ENCODE measurements at regions of chr11 and their contacts with region 1.

Region 1: DNA sequence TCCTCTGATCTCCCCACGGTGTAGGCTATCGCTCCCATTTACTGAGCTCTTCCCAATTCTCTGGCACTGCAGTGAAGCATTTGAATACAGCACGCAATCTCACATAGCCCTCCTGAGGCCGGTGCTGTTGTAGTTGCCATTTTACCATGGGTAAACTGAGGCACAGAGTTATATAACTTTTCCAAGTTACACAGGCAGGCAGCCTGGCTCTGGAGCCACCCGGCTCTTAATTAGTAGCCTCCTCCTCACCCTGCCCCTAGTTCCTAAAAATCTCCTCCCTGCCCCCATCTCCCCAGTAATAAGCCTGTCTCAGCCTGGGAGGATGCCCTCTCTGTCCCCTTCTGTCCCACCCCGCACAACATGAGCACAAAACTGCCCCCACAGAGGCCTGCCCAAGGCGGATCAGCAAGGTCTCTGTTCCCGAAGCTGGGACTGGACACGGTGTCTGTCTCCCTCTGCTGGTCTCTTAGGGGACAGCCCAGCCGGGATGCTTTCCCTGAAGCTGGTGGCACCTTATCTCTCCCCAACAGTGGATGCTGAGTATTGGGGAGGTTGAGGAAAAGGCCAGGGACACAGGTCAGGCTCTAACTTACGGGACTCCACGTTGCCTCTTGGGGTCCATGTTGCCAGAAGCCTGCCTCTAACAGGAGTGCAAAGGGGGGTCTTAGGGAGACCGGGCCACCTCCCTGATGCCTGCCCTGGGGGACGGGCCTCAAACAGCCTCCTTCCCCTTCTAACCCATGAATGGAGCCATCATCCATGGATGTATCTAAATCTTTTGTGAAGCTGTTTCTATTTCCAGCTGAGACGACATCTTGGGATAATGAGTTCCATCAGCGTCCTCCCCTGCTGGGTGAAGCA is 9.1 kb upstream of the CLCF1 start:
- DNase-seq: peak; percentile 59 to 96 (median 87)

Region 2: GRCh38 chr11:67113231-67113721 is 269.2 kb before region 1 on chr11:
- intact Hi-C with region 1: no loop called
- DNase-seq: peak in 1 of 10 donors; percentile 70

Region 3: GRCh38 chr11:67265633-67266423 is 116.7 kb before region 1 on chr11:
- intact Hi-C with region 1: loop called (anchors 5 kb)
- DNase-seq: peak in 7 of 10 donors; percentile 69 to 97 (median 84)

Region 4: GRCh38 chr11:67353317-67354074 is 29.0 kb before region 1 on chr11 and contains the start of gene POLD4:
- intact Hi-C with region 1: loop called (anchors 1 kb)
- DNase-seq: peak; percentile 96 to 100 (median 99)

Measured in posterior cingulate gyrus (tissue), 11 donors.